Activated CD8-positive, alpha-beta T cell treated with anti-CD3 and anti-CD28 coated beads for 36 hours (primary cell): ENCODE measurements at regions of chr1 and their contacts with region 1.

Region 1: GRCh38 chr1:226708342-226708780 is 30.7 kb downstream of the ITPKB start:
- DNase-seq: peak; percentile 63
- ATAC-seq: peak; percentile 69
- H3K4me3 Mint-ChIP-seq: peak overlapping the region; percentile 61
- H3K27ac Mint-ChIP-seq: peak overlapping the region; percentile 99
- H3K4me1 Mint-ChIP-seq: peaks cover 88% of the 10 kb centered on the region
- H3K27me3 Mint-ChIP-seq: no peaks in the 10 kb centered on the region
- CTCF ChIP-seq: no peak

Region 2: GRCh38 chr1:226575739-226576378 is 132.5 kb before region 1 on chr1:
- CTCF ChIA-PET with region 1: no interaction called
- POLR2A ChIA-PET with region 1: no interaction called
- intact Hi-C with region 1: no loop called
- DNase-seq: no peak
- ATAC-seq: no peak
- H3K4me3 Mint-ChIP-seq: no peak overlapping the region
- H3K27ac Mint-ChIP-seq: no peak overlapping the region
- H3K4me1 Mint-ChIP-seq: no peaks in the 10 kb centered on the region
- H3K27me3 Mint-ChIP-seq: no peaks in the 10 kb centered on the region
- CTCF ChIP-seq: no peak

Region 3: GRCh38 chr1:226662642-226663326 is 45.6 kb before region 1 on chr1:
- CTCF ChIA-PET with region 1: interaction called, 4 read pairs
- POLR2A ChIA-PET with region 1: interaction called, 10 read pairs
- intact Hi-C with region 1: no loop called
- DNase-seq: peak; percentile 96
- ATAC-seq: peak; percentile 91
- H3K4me3 Mint-ChIP-seq: peak overlapping the region; percentile 49
- H3K27ac Mint-ChIP-seq: peak overlapping the region; percentile 96
- H3K4me1 Mint-ChIP-seq: peaks cover 98% of the 10 kb centered on the region
- H3K27me3 Mint-ChIP-seq: no peaks in the 10 kb centered on the region
- CTCF ChIP-seq: no peak

Region 4: DNA sequence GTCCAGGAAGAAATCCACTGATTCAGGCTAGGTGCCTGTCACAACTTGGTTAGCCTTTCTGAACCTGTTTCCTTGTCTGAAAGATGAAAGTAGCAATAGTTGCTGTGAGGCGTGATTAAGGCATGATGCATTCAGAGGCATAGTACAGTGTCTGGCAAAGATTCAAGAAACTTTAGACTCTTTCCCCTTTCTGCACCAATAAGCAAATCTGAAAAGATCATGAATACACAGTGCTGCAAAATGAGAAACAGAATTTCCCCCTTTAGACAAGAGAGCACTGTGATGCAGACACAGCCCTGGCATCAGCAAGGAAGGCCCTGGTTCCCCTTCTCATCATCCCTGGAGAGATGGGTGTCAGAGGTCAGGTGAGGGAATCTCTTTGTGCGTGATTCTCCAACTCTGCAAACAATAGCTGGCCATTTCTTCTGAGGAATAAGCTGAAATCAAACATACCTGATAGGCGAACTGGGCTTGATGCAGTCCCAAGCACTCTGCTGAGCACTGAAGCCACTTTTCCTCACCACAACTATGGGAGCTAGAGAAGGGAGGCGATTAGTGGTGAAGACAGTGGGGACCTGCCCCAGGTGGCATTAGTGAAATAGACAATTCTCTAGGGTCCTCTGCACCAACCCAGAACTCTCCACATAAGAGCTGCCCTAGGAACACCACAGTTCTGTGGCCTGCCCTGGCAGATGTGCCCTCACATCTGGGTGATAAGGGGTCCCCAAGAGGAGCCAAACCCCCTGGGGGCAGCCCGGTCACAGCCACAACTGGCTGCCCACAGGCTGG is 11.0 kb before region 1 on chr1:
- CTCF ChIA-PET with region 1: interaction called, 15 read pairs
- POLR2A ChIA-PET with region 1: interaction called, 27 read pairs
- intact Hi-C with region 1: no loop called
- DNase-seq: peak; percentile 48
- ATAC-seq: peak; percentile 75
- H3K4me3 Mint-ChIP-seq: peak overlapping the region; percentile 11
- H3K27ac Mint-ChIP-seq: peak overlapping the region; percentile 93
- H3K4me1 Mint-ChIP-seq: peaks cover 90% of the 10 kb centered on the region
- H3K27me3 Mint-ChIP-seq: no peaks in the 10 kb centered on the region
- CTCF ChIP-seq: no peak

Region 5: GRCh38 chr1:226723657-226724532 is 15.5 kb after region 1 on chr1:
- CTCF ChIA-PET with region 1: interaction called, 12 read pairs
- POLR2A ChIA-PET with region 1: interaction called, 19 read pairs
- intact Hi-C with region 1: no loop called
- DNase-seq: peak; percentile 59
- ATAC-seq: peak; percentile 31
- H3K4me3 Mint-ChIP-seq: peak overlapping the region; percentile 92
- H3K27ac Mint-ChIP-seq: peak overlapping the region; percentile 95
- H3K4me1 Mint-ChIP-seq: peaks cover 91% of the 10 kb centered on the region
- H3K27me3 Mint-ChIP-seq: no peaks in the 10 kb centered on the region
- CTCF ChIP-seq: no peak

Region 6: GRCh38 chr1:226736908-226737818 is 28.8 kb after region 1 on chr1:
- CTCF ChIA-PET with region 1: interaction called, 18 read pairs
- POLR2A ChIA-PET with region 1: interaction called, 71 read pairs
- intact Hi-C with region 1: no loop called
- DNase-seq: peak; percentile 73
- ATAC-seq: peak; percentile 46
- H3K4me3 Mint-ChIP-seq: peak overlapping the region; percentile 92
- H3K27ac Mint-ChIP-seq: peak overlapping the region; percentile 88
- H3K4me1 Mint-ChIP-seq: peaks cover 39% of the 10 kb centered on the region
- H3K27me3 Mint-ChIP-seq: no peaks in the 10 kb centered on the region
- CTCF ChIP-seq: peak; percentile 23

Region 7: DNA sequence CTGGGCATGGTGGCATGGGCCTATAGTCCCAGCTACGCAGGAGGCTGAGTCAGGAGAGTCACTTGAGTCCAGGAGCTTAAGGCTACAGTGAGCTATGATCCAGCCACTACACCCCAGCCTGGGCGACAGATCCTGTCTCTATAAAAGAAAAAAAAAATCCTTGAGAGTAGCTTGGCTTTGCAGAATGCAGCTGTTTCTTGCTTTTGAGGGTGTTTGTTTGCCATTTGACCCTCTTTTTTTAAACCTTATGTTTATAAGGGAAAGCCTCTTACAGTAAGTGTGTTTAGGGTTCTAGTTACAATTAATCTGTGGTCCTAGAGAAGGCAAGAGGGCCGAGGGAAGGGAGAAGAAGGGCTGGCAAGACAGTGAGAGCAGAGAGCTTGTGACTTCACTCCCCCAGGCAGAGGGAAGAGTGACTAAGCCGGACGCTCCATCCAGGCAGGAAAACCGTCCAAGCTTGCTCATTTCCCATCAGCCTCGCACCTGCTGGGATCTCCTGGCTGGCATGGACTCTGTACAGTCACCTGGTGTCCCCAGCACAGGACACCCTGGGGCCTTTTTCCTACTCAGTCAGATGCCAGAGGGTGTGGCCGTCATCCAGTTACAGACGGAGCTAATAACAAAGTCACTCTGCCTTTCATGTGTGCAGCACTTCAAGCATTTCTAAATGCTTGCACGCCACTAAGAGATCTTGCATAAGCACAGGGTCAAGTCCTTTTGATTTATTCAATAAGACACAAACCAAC is 106.6 kb after region 1 on chr1:
- CTCF ChIA-PET with region 1: no interaction called
- POLR2A ChIA-PET with region 1: no interaction called
- intact Hi-C with region 1: no loop called
- DNase-seq: no peak
- ATAC-seq: no peak
- H3K4me3 Mint-ChIP-seq: no peak overlapping the region
- H3K27ac Mint-ChIP-seq: no peak overlapping the region
- H3K4me1 Mint-ChIP-seq: no peaks in the 10 kb centered on the region
- H3K27me3 Mint-ChIP-seq: no peaks in the 10 kb centered on the region
- CTCF ChIP-seq: no peak